Heart left ventricle (tissue), 16 donors: ENCODE measurements at regions of chr18 and their contacts with region 1.

Region 1: GRCh38 chr18:29879763-29880162 is 1162.8 kb downstream of the DSC3 start:
- DNase-seq: no peak
- ATAC-seq: no peak
- H3K4me3 ChIP-seq: no peak overlapping the region
- H3K27ac ChIP-seq: no peak overlapping the region
- H3K4me1 ChIP-seq: no peaks in the 10 kb centered on the region
- H3K27me3 ChIP-seq: no peaks in the 10 kb centered on the region
- CTCF ChIP-seq: no peak
- POLR2A ChIP-seq: no peak

Region 2: DNA sequence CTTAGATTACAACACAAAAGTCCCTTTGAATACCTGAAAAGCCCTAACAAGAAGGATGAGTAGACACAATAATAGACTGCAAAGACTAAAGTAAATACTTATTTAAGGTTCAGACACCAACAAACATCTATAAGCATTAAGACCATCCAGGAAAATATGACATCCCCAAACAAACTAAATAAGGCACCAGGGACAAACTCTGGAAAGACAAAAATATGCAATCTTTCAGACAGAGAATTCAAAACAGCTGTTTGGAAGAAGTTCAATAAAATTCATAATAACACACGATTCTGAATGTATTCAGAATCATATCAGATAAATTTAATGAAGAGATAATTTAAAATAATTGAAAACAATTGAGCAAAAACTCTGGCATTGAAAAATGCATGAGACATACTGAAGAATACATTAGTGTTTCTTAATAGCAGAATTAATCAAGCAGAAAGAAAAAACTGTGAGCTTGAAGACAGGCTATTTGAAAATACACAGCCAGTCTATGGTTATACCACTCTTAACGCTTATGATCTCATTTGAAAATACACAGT is 226.0 kb before region 1 on chr18:
- intact Hi-C with region 1: no loop called
- DNase-seq: no peak
- ATAC-seq: no peak
- H3K4me3 ChIP-seq: no peak overlapping the region
- H3K27ac ChIP-seq: no peak overlapping the region
- H3K4me1 ChIP-seq: peaks cover 0 to 9% (median 0%) of the 10 kb centered on the region in 12 donors
- H3K27me3 ChIP-seq: no peaks in the 10 kb centered on the region
- CTCF ChIP-seq: no peak
- POLR2A ChIP-seq: no peak

Region 3: DNA sequence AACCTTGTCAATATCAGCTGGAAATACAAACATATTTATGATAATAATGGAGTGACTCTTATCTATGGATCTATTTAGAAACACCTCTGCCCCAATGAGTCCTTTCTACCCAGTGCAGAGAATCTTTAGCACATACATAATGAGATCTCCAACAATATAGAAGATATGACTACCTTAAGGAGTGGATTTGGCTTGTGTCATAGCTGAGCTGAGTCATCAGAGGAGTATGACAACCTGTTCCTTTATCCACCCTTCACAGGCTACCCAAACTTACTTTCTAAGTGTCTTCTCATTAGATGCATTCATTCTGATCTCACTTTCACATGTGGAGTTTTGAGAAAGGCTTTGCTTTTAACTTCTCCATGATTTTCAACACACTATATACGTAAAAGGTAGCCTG is 56.1 kb before region 1 on chr18:
- intact Hi-C with region 1: loop called in 1 of 10 experiments (anchors 10 kb)
- DNase-seq: no peak
- ATAC-seq: no peak
- H3K4me3 ChIP-seq: no peak overlapping the region
- H3K27ac ChIP-seq: no peak overlapping the region
- H3K4me1 ChIP-seq: no peaks in the 10 kb centered on the region
- H3K27me3 ChIP-seq: no peaks in the 10 kb centered on the region
- CTCF ChIP-seq: no peak
- POLR2A ChIP-seq: no peak